CD4-positive, alpha-beta T cell (primary cell): ENCODE measurements at regions of chr15 and their contacts with region 1.

Region 1: DNA sequence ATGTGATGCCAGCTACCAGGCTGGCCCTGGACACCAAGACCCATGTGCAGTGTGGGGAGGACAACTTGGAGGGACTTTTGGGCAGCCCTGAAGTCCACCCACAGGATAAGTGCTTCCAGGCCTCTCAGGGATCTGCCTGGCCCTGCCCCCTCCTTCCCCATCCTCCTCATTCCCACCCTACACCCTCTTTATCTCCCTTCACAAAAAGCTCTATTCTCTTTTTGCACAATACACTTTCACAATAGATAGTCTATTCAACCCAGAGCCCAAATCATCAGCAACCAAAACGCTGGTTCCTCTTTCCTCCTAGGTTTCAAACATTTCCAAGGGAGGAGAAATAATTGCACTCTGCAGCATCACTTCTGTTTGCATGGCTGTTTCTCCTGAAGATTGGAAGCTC is 7.8 kb upstream of the ZNF710 start:
- DNase-seq: no peak
- ATAC-seq: no peak
- H3K4me3 ChIP-seq: no peak overlapping the region
- H3K4me3 Mint-ChIP-seq: no peak overlapping the region
- H3K27ac ChIP-seq: no peak overlapping the region
- H3K27ac Mint-ChIP-seq: no peak overlapping the region
- H3K4me1 ChIP-seq: peaks cover 2% of the 10 kb centered on the region
- H3K4me1 Mint-ChIP-seq: no peaks in the 10 kb centered on the region
- H3K27me3 ChIP-seq: no peaks in the 10 kb centered on the region
- H3K27me3 Mint-ChIP-seq: no peaks in the 10 kb centered on the region
- CTCF ChIP-seq: no peak

Region 2: DNA sequence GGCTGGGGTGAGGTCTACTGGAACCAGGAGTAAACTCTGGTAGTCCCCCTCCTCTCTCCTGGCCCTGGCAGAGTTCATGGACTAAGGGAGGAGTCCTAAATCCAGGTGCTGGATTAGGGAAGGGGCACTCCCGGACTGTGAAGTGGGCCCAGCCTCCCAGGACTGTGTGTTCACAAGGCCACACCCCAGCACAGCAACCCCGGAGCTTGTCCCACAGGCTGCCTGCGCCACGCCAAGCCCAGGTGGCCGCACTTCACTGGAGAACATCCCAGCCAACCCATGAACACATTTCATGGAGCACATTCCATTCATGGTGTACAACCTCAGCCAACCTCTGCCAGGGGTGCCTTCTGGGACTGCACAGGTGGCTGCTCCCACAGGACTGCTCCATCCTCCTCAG is 88.8 kb before region 1 on chr15:
- CTCF ChIA-PET with region 1: no interaction called
- POLR2A ChIA-PET with region 1: no interaction called
- intact Hi-C with region 1: loop called in 1 of 2 experiments (anchors 5 kb)
- DNase-seq: no peak
- ATAC-seq: no peak
- H3K4me3 ChIP-seq: no peak overlapping the region
- H3K4me3 Mint-ChIP-seq: no peak overlapping the region
- H3K27ac ChIP-seq: no peak overlapping the region
- H3K27ac Mint-ChIP-seq: no peak overlapping the region
- H3K4me1 ChIP-seq: no peaks in the 10 kb centered on the region
- H3K4me1 Mint-ChIP-seq: no peaks in the 10 kb centered on the region
- H3K27me3 ChIP-seq: peaks cover 0 to 2% of the 10 kb centered on the region in 2 experiments
- H3K27me3 Mint-ChIP-seq: peaks cover 6% of the 10 kb centered on the region
- CTCF ChIP-seq: no peak

Region 3: GRCh38 chr15:90013503-90013937 is 20.2 kb after region 1 on chr15:
- CTCF ChIA-PET with region 1: no interaction called
- POLR2A ChIA-PET with region 1: no interaction called
- intact Hi-C with region 1: no loop called
- DNase-seq: peak in 3 of 14 experiments; percentile 73 to 87 (median 79)
- ATAC-seq: peak; percentile 88
- H3K4me3 ChIP-seq: peak overlapping the region; percentile 10
- H3K4me3 Mint-ChIP-seq: peak overlapping the region; percentile 68
- H3K27ac ChIP-seq: peak overlapping the region in 1 of 2 donors; percentile 14
- H3K27ac Mint-ChIP-seq: peak overlapping the region; percentile 61
- H3K4me1 ChIP-seq: peaks cover 55% of the 10 kb centered on the region
- H3K4me1 Mint-ChIP-seq: peaks cover 69% of the 10 kb centered on the region
- H3K27me3 ChIP-seq: no peaks in the 10 kb centered on the region
- H3K27me3 Mint-ChIP-seq: no peaks in the 10 kb centered on the region
- CTCF ChIP-seq: no peak